B cell (primary cell): ENCODE measurements at regions of chr19 and their contacts with region 1.

Region 1: GRCh38 chr19:39846176-39846677 is at the start of gene FBL:
- DNase-seq: peak; percentile 96
- ATAC-seq: peak; percentile 95
- H3K4me3 ChIP-seq: peak within 1 kb of the TSS; percentile 76 to 91 (median 89)
- H3K4me3 Mint-ChIP-seq: peak within 1 kb of the TSS; percentile 95
- H3K27ac ChIP-seq: peak within 1 kb of the TSS; percentile 73 to 88
- H3K27ac Mint-ChIP-seq: peak within 1 kb of the TSS; percentile 96
- H3K4me1 ChIP-seq: peaks cover 27 to 37% of the 10 kb centered on the region in 2 donors
- H3K4me1 Mint-ChIP-seq: peaks cover 49% of the 10 kb centered on the region
- H3K27me3 ChIP-seq: no peaks in the 10 kb centered on the region
- H3K27me3 Mint-ChIP-seq: peaks cover under 1% of the 10 kb centered on the region
- CTCF ChIP-seq: no peak
- total RNA-seq, gene FBL: 253 and 254 TPM in 2 replicates

Region 2: GRCh38 chr19:39341129-39341718 is 505.0 kb before region 1 on chr19:
- CTCF ChIA-PET with region 1: no interaction called
- POLR2A ChIA-PET with region 1: no interaction called
- intact Hi-C with region 1: no loop called
- DNase-seq: no peak
- ATAC-seq: no peak
- H3K4me3 ChIP-seq: peak overlapping the region; percentile 88 to 98 (median 98)
- H3K4me3 Mint-ChIP-seq: peak overlapping the region; percentile 97
- H3K27ac ChIP-seq: peak overlapping the region; percentile 79
- H3K27ac Mint-ChIP-seq: peak overlapping the region; percentile 95
- H3K4me1 ChIP-seq: peaks cover 39 to 52% of the 10 kb centered on the region in 2 donors
- H3K4me1 Mint-ChIP-seq: peaks cover 65% of the 10 kb centered on the region
- H3K27me3 ChIP-seq: no peaks in the 10 kb centered on the region
- H3K27me3 Mint-ChIP-seq: no peaks in the 10 kb centered on the region
- CTCF ChIP-seq: no peak

Region 3: GRCh38 chr19:39671738-39672363 is 174.4 kb before region 1 on chr19:
- CTCF ChIA-PET with region 1: interaction called, 3 read pairs
- POLR2A ChIA-PET with region 1: no interaction called
- intact Hi-C with region 1: loop called (anchors 5 kb)
- DNase-seq: peak; percentile 75
- ATAC-seq: peak; percentile 51
- H3K4me3 ChIP-seq: no peak overlapping the region
- H3K4me3 Mint-ChIP-seq: no peak overlapping the region
- H3K27ac ChIP-seq: no peak overlapping the region
- H3K27ac Mint-ChIP-seq: no peak overlapping the region
- H3K4me1 ChIP-seq: peaks cover 0 to 3% of the 10 kb centered on the region in 2 donors
- H3K4me1 Mint-ChIP-seq: peaks cover 4% of the 10 kb centered on the region
- H3K27me3 ChIP-seq: peaks cover 0 to 12% (median 4%) of the 10 kb centered on the region in 4 experiments
- H3K27me3 Mint-ChIP-seq: peaks cover 33% of the 10 kb centered on the region
- CTCF ChIP-seq: peak; percentile 72

Region 4: DNA sequence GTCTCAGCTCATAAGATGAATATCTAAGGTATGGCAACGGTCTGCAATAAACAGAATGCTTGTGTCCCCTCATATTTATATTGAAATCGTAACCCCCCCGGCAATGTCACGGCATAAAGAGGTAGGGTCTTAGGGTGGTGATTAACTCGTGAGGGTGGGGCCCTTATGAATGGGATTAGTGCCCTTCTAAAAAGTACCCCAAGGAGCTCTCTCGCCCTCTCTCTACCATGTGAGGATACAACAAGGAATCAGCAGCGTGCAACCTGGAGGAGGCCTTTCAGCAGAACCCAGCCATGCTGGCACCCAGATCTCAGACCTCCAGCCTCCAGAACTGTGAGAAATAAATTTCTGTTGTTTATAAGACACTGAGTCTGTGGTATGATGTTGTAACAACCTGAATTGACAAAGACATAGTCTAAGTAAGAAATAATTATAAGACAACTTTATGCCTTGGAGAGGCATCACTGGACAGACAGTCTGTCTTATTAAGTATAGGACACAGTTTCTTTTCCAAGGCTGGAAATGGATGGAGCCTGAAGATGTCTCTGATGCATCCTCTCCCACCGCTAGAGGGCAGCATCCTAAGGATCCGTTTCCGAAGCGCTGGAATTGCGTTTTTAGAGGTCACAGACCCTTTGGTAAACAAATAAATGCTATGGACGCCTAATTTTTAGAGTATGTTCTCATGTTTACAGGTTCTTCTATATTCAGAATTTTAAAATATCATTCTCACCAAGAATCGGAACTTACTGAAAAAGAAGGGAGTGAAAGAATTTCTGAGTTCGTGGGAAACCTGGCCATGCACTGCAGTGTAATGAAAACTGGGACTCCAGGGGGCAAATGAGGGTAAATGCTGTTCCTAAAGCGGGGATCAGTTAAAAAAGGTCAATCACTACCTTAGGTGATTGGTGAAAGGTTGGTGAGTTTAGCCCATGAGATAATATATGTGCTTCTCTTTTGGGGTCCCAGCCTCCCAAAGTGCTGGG is 80.8 kb before region 1 on chr19:
- CTCF ChIA-PET with region 1: interaction called, 38 read pairs
- POLR2A ChIA-PET with region 1: no interaction called
- intact Hi-C with region 1: loop called (anchors 1 kb)
- DNase-seq: peak; percentile 51
- ATAC-seq: no peak
- H3K4me3 ChIP-seq: no peak overlapping the region
- H3K4me3 Mint-ChIP-seq: no peak overlapping the region
- H3K27ac ChIP-seq: no peak overlapping the region
- H3K27ac Mint-ChIP-seq: no peak overlapping the region
- H3K4me1 ChIP-seq: no peaks in the 10 kb centered on the region
- H3K4me1 Mint-ChIP-seq: no peaks in the 10 kb centered on the region
- H3K27me3 ChIP-seq: peaks cover 0 to 7% (median 1%) of the 10 kb centered on the region in 4 experiments
- H3K27me3 Mint-ChIP-seq: peaks cover 35% of the 10 kb centered on the region
- CTCF ChIP-seq: peak; percentile 66

Region 5: GRCh38 chr19:39792999-39793546 is 53.2 kb before region 1 on chr19:
- CTCF ChIA-PET with region 1: interaction called, 159 read pairs
- POLR2A ChIA-PET with region 1: no interaction called
- intact Hi-C with region 1: loop called (anchors 1 kb)
- DNase-seq: peak; percentile 88
- ATAC-seq: peak; percentile 94
- H3K4me3 ChIP-seq: peak overlapping the region; percentile 42 to 76 (median 58)
- H3K4me3 Mint-ChIP-seq: peak overlapping the region; percentile 79
- H3K27ac ChIP-seq: no peak overlapping the region
- H3K27ac Mint-ChIP-seq: peak overlapping the region; percentile 37
- H3K4me1 ChIP-seq: peaks cover 0 to 9% of the 10 kb centered on the region in 2 donors
- H3K4me1 Mint-ChIP-seq: peaks cover 8% of the 10 kb centered on the region
- H3K27me3 ChIP-seq: no peaks in the 10 kb centered on the region
- H3K27me3 Mint-ChIP-seq: peaks cover 6% of the 10 kb centered on the region
- CTCF ChIP-seq: peak; percentile 91

Region 6: DNA sequence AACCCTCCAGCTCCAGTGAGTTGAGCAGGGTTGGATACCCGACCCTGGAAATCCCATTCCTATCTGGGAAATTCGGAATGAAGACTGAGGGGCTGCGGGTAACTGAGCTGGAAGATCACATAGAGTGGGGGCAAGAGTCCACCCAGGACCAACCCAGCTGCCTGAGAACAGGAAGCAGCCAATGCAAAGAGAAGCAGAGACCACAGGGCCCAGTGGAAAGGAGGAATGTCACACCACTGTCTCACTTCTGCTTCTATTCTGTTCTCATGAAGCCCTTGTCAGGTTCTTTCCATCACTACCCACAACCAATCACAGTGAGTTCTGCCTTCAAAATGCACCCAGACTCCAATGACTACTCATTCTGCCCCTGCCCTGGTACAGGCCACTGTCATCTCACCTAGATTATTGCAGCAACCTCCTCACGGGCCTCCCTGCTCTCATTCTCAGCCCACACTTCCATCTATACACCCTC is 27.6 kb before region 1 on chr19:
- CTCF ChIA-PET with region 1: interaction called, 19 read pairs
- POLR2A ChIA-PET with region 1: no interaction called
- intact Hi-C with region 1: no loop called
- DNase-seq: no peak
- ATAC-seq: peak; percentile 58
- H3K4me3 ChIP-seq: no peak overlapping the region
- H3K4me3 Mint-ChIP-seq: no peak overlapping the region
- H3K27ac ChIP-seq: peak overlapping the region in 1 of 2 donors; percentile 9
- H3K27ac Mint-ChIP-seq: peak overlapping the region; percentile 77
- H3K4me1 ChIP-seq: peaks cover 17 to 20% of the 10 kb centered on the region in 2 donors
- H3K4me1 Mint-ChIP-seq: peaks cover 16% of the 10 kb centered on the region
- H3K27me3 ChIP-seq: no peaks in the 10 kb centered on the region
- H3K27me3 Mint-ChIP-seq: no peaks in the 10 kb centered on the region
- CTCF ChIP-seq: no peak

Region 7: GRCh38 chr19:39824143-39825092 is 21.8 kb before region 1 on chr19:
- CTCF ChIA-PET with region 1: interaction called, 23 read pairs
- POLR2A ChIA-PET with region 1: no interaction called
- intact Hi-C with region 1: loop called (anchors 1 kb)
- DNase-seq: peak; percentile 92
- ATAC-seq: peak; percentile 98
- H3K4me3 ChIP-seq: peak overlapping the region; percentile 66 to 85 (median 79)
- H3K4me3 Mint-ChIP-seq: no peak overlapping the region
- H3K27ac ChIP-seq: peak overlapping the region; percentile 38 to 55
- H3K27ac Mint-ChIP-seq: no peak overlapping the region
- H3K4me1 ChIP-seq: peaks cover 18 to 30% of the 10 kb centered on the region in 2 donors
- H3K4me1 Mint-ChIP-seq: peaks cover 13% of the 10 kb centered on the region
- H3K27me3 ChIP-seq: no peaks in the 10 kb centered on the region
- H3K27me3 Mint-ChIP-seq: no peaks in the 10 kb centered on the region
- CTCF ChIP-seq: no peak

Region 8: DNA sequence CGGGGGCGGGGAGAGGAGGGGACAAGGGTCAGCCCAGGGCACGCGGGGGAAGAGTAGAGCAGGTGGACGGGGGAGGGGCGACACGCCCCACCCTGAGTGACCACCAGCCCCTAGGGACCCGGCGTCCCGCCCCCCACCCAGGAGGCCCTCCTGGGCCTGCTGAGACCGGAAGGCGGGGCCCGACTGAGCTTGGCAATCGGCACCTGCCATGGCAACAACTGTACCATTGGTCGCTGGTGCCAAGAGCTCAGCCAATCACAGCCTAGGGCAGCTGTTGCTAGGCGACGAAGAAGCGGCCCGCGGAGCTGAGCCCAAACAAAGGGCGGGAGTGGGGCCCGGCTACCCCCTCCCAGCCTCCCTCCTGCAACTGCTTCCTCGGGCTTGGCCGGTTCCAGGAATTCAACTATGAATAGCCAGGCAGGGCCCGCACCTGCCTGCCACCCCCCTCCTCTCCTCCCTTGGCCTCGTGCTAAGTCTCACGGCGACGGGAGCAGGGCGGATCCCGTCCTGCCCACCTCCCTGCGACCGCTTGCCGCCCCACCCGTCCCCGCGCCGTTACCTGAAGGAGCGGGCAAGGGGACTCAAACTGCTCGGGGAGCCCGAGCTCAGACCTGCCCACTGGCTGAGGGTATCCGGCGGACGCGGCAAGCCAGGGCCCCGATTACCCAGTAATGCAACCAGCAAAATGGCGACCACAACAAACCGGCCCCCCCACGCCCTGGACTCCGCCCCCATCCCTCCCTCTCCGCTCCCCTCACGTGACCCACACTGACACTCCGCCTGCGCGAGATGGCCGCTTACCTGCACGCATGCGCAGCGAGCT is 12.6 kb before region 1 on chr19 and contains the start of gene DYRK1B:
- CTCF ChIA-PET with region 1: interaction called, 47 read pairs
- POLR2A ChIA-PET with region 1: interaction called, 21 read pairs
- intact Hi-C with region 1: loop called (anchors 1 kb)
- DNase-seq: peak; percentile 99
- ATAC-seq: peak; percentile 84
- H3K4me3 ChIP-seq: peak within 1 kb of the TSS; percentile 66 to 100 (median 98)
- H3K4me3 Mint-ChIP-seq: peak within 1 kb of the TSS; percentile 87
- H3K27ac ChIP-seq: peak within 1 kb of the TSS; percentile 94 to 99
- H3K27ac Mint-ChIP-seq: peak within 1 kb of the TSS; percentile 92
- H3K4me1 ChIP-seq: peaks cover 16 to 26% of the 10 kb centered on the region in 2 donors
- H3K4me1 Mint-ChIP-seq: peaks cover 32% of the 10 kb centered on the region
- H3K27me3 ChIP-seq: no peaks in the 10 kb centered on the region
- H3K27me3 Mint-ChIP-seq: no peaks in the 10 kb centered on the region
- CTCF ChIP-seq: no peak
- total RNA-seq, gene DYRK1B: 36.6 and 44.4 TPM in 2 replicates